Mammary epithelial cell (primary cell): ENCODE measurements at regions of chr11 and their contacts with region 1.

Region 1: DNA sequence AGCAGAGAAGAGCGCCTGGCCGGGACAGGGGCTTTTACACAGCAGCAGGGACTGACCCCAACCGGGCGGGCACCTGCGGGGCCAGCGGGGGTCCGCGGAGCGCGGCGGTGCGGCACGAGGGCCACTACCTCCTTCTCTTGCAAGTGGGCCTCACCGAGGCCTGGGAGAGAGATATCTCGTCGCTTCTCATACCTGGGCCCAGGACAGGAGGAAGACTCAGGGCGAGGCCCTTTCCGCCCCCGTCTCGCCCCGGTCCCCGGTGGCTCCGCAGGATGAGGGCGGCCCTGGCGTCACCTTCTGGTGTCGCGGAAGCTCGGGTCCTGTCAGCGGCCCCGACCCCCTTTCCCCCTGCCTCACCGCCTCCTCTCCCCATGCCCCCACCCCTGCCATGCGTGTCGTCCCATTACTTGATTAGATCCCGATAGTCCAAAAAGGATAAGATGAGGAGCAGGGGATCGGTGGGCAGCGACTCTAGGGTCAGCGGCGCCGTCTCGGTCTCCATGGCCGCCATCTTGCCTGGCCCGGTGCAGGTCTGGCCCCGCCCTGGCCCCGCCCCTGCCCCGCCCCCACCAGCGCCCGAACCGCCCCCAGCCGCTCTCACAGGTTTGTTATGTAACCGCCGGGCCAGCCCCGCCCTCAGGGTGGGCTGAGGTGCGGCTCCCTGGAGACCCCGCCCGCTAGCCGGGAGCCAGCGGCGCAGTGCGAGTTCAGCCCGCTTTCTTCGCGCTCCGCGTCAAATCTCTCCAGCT is at the start of gene FBXO3:
- DNase-seq: peak; percentile 78
- H3K4me3 ChIP-seq: peak within 1 kb of the TSS; percentile 86 to 93 (median 88)
- H3K27ac ChIP-seq: peak within 1 kb of the TSS; percentile 76
- H3K4me1 ChIP-seq: peaks cover 39% of the 10 kb centered on the region
- H3K27me3 ChIP-seq: no peaks in the 10 kb centered on the region
- CTCF ChIP-seq: no peak
- total RNA-seq, gene FBXO3: 27.6 to 44.8 TPM

Region 2: DNA sequence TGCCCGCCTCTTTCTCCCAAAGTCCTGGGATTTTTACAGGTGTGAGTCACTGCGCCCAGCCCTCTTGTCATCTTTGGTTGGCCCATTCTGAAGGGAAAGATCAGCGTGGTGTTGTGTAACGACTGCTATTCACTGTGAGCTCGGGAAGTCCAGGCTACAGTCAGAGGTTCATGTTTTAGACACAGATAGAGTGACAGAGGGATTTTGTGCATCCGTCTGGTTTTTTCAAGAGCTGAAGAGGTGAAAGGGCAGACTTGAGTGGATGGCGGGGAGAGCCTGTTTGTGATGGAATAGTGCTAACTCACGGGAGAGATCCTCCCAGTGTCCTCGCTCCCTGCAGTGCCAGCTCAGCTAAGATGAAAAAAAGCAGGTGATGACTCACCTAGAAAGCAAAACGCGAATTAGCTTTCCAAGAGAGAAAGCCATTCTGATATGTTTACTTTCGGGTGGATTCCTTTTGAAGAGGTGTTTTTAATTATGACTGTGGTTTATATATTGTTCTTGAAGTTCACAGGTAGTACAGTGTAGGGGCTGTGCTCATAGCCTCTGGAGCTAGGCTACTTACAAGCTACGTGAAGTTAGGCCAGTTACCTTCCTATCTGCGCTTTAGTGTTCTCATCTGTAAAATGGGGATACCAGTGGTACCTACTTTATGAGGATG is 140.8 kb before region 1 on chr11:
- CTCF ChIA-PET with region 1: no interaction called
- dilution Hi-C with region 1: no loop called
- in situ Hi-C with region 1: no loop called
- intact Hi-C with region 1: no loop called
- DNase-seq: peak; percentile 98
- H3K4me3 ChIP-seq: no peak overlapping the region
- H3K27ac ChIP-seq: peak overlapping the region; percentile 97
- H3K4me1 ChIP-seq: peaks cover 61% of the 10 kb centered on the region
- H3K27me3 ChIP-seq: no peaks in the 10 kb centered on the region
- CTCF ChIP-seq: no peak

Region 3: DNA sequence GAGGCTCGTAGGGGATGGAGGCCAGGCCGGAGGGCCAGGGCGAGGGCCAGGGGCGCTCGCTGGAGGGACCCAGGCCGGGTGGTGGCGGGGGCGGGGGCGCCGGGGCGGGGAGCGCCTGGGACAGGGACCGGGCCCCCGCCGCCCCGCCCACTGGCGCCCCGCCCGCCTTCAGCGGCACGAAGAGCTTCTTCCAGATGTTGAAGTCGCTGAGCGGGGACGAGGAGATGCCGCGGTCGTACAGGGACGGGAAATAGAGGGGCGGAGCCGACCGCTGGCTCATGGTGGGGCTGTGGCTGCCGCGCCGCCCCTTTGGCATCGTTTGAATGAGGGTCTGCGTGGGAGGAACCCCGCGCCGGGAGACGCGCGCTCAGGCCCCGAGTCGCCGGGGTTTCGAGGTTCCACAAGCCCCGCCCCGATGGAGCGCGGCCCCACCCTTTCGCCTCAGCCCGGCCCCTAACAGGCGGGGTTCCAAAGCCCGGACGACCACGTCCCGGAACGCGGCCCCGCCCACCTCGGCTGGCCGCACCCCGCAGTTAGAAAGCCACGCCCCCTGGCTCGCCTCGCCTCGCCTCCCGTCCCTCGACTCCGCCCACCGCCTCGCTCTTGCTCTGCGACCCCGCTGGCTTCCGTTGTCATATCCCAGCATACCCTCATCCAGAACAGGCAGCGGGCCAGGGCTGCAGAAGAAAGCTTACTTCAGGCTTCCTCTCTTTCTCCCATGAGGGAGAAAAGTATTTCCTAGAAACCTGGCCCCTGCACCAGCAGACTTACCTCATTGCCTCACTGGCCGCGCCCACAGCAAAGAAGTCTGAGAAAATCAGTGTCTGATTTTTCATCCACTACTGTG is 73.5 kb before region 1 on chr11 and contains the start of gene C11orf91:
- CTCF ChIA-PET with region 1: no interaction called
- dilution Hi-C with region 1: no loop called
- in situ Hi-C with region 1: no loop called
- intact Hi-C with region 1: loop called (anchors 2 kb)
- DNase-seq: peak; percentile 92
- H3K4me3 ChIP-seq: peak within 1 kb of the TSS; percentile 5 to 70 (median 22)
- H3K27ac ChIP-seq: peak within 1 kb of the TSS; percentile 98
- H3K4me1 ChIP-seq: peaks cover 84% of the 10 kb centered on the region
- H3K27me3 ChIP-seq: no peaks in the 10 kb centered on the region
- CTCF ChIP-seq: no peak
- total RNA-seq, gene C11orf91: 7.6 TPM in 1 of 2 donors, not detected in the other

Region 4: GRCh38 chr11:33753304-33753967 is 20.7 kb before region 1 on chr11:
- CTCF ChIA-PET with region 1: interaction called, 57 read pairs
- dilution Hi-C with region 1: no loop called
- in situ Hi-C with region 1: no loop called
- intact Hi-C with region 1: no loop called
- DNase-seq: peak; percentile 45
- H3K4me3 ChIP-seq: no peak overlapping the region
- H3K27ac ChIP-seq: no peak overlapping the region
- H3K4me1 ChIP-seq: no peaks in the 10 kb centered on the region
- H3K27me3 ChIP-seq: no peaks in the 10 kb centered on the region
- CTCF ChIP-seq: no peak